ENCODE measurements at regions of chr7 and their contacts with region 1.

Region 1: DNA sequence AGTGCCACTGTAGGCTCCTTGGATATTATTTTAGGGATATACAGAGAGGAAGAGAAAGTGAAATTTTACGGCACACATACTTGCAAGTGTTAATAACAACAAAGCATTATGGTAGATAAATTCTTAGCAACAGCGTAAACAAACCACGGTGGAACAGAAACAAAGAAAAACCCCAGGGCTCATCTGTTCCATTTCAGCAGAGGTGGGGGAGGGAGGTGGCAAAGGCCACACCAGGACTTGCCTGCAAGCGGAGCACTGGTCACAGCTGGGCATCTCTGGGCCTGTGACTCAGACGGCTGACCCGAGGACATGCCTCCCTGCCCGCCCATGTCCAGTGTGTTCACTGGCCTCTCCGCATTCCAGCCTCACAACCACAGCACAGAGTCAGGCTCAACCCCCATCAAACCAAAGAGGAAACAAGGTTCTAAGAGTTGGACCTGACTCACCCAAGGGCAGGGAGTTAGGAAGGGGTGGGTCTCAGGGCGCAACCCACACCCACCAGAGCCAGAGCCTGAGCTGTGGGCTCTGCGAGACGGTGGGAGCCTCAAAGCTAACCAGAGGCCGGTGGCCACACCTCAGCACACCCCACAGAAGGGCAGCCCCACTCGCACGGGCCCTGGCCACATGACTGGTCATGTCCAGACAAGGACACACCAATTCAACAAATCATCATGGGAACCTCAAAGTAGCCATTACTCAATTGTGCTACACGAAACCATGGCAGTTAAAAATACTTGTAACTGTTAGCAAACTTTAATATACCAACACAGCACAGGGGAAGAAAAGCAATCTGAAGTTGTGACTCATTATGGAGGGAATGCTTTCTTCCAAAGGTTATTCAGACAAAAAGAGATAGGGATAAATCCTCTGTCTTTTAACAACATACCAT is 10.7 kb downstream of the ESYT2 start:
- DNase-seq: peak; percentile 87
- H3K4me3 ChIP-seq: peak overlapping the region; percentile 51
- H3K27ac ChIP-seq: peak overlapping the region; percentile 96
- H3K4me1 ChIP-seq: peaks cover 91% of the 10 kb centered on the region
- H3K27me3 ChIP-seq: no peaks in the 10 kb centered on the region
- CTCF ChIP-seq: no peak

Region 2: GRCh38 chr7:158782761-158783401 is 35.7 kb before region 1 on chr7:
- intact Hi-C with region 1: loop called (anchors 5 kb)
- DNase-seq: peak; percentile 64
- H3K4me3 ChIP-seq: peak overlapping the region; percentile 48
- H3K27ac ChIP-seq: peak overlapping the region; percentile 89
- H3K4me1 ChIP-seq: peaks cover 55% of the 10 kb centered on the region
- H3K27me3 ChIP-seq: no peaks in the 10 kb centered on the region
- CTCF ChIP-seq: peak; percentile 69